ENCODE measurements at regions of chr6 and their contacts with region 1.

Region 1: DNA sequence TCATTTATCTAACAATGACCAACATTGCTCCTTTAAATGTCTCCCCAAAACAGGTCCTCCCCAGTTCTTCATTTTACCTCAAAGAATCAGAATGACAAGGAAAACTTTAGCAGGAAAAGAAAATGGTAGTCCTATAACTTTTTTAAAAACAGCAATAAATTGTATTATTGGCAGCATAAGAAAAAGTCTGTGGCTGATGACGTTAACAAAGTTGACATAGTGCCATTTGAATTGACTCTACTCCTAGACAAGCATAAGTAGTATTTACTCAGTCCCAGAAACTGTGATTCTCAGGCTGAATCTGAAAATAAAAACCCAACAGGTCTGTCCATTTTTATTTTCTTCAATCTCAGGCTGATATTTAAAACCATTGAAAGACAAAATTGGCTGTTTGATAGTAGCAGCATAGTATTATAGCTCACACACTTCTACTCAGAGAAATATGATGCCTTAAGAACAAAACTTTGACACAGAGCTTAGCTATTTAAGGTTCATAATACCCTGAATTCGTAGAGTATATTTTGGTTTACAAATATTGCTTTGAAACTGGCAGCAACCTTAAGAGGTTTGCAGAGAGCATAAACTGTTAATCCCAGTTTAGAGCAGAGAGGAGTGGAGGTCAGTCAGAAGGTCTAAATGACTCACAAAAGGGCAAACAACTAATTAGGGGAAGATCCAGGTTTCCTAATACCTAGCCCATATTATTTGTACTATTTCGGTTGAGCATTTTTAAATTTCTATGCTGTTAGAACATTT is 35.0 kb upstream of the TENT5A start:
- DNase-seq: peak; percentile 56
- ATAC-seq: peak; percentile 68
- H3K4me3 ChIP-seq: peak overlapping the region; percentile 10; the same call in 1 of the 2 replicates
- H3K27ac ChIP-seq: peak overlapping the region; percentile 93
- H3K4me1 ChIP-seq: peaks cover 34% of the 10 kb centered on the region
- H3K27me3 ChIP-seq: no peaks in the 10 kb centered on the region
- CTCF ChIP-seq: no peak

Region 2: GRCh38 chr6:81752138-81752920 is 35.2 kb before region 1 on chr6 and contains the start of gene TENT5A:
- CTCF ChIA-PET with region 1: no interaction called
- POLR2A ChIA-PET with region 1: no interaction called
- intact Hi-C with region 1: no loop called
- DNase-seq: peak; percentile 84
- ATAC-seq: peak; percentile 62
- H3K4me3 ChIP-seq: peak within 1 kb of the TSS; percentile 77
- H3K27ac ChIP-seq: peak within 1 kb of the TSS; percentile 75
- H3K4me1 ChIP-seq: peaks cover 16% of the 10 kb centered on the region
- H3K27me3 ChIP-seq: no peaks in the 10 kb centered on the region
- CTCF ChIP-seq: peak; percentile 21; the same call in 1 of the 2 replicates
- total RNA-seq, gene TENT5A: 5.6 and 6.4 TPM in 2 replicates

Region 3: GRCh38 chr6:81766482-81767069 is 20.9 kb before region 1 on chr6:
- CTCF ChIA-PET with region 1: no interaction called
- POLR2A ChIA-PET with region 1: no interaction called
- intact Hi-C with region 1: no loop called
- DNase-seq: peak; percentile 82
- ATAC-seq: peak; percentile 25
- H3K4me3 ChIP-seq: peak overlapping the region; percentile 30
- H3K27ac ChIP-seq: peak overlapping the region; percentile 78
- H3K4me1 ChIP-seq: peaks cover 54% of the 10 kb centered on the region
- H3K27me3 ChIP-seq: no peaks in the 10 kb centered on the region
- CTCF ChIP-seq: no peak

Region 4: GRCh38 chr6:81865712-81866111 is 78.2 kb after region 1 on chr6:
- CTCF ChIA-PET with region 1: no interaction called
- POLR2A ChIA-PET with region 1: no interaction called
- intact Hi-C with region 1: loop called (anchors 10 kb)
- DNase-seq: peak; percentile 73
- ATAC-seq: peak; percentile 91
- H3K4me3 ChIP-seq: no peak overlapping the region
- H3K27ac ChIP-seq: peak overlapping the region; percentile 67
- H3K4me1 ChIP-seq: peaks cover 25% of the 10 kb centered on the region
- H3K27me3 ChIP-seq: no peaks in the 10 kb centered on the region
- CTCF ChIP-seq: no peak